Ascending aorta (tissue), 2 donors: ENCODE measurements at regions of chr5 and their contacts with region 1.

Region 1: DNA sequence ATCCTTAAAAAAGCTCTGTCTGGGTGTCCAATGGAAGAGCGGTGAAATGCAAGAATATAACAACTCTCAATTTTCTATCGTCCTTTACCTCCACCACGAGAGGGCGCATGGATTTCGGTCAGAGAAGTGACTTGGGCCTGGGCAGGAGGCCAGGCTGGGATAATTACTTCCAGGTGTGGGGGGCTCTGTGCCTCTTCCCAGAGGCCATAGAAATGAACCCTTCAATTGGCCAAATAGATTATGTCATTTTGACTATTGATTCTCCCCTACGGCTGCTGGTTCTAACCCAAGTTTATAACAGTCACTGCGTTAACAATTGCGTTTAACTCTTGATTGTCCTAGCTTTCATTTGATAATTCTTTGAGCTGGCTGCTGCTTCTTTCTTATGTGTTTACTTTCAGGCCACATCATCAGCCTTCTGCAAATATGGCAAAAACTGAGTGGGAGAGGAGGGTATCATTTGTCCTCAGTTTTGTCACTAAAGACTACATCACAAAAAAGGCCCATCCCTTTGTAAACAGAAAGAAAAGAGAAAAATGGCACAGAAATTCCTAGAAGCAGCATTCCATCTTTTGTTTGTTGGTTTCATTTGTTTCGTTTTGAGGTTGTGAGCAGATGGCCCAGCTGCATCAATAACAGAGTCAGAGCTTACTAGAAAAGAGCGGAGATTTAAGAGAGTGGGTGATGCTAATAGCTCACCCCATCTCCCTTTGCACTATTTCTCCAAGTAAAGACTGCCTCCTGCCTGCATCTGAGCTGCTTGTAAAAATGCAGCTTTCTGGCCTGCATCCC is 45.4 kb upstream of the ZFR start:
- DNase-seq: peak in 1 of 2 donors; percentile 86
- H3K4me3 ChIP-seq: no peak overlapping the region
- H3K27ac ChIP-seq: no peak overlapping the region
- H3K4me1 ChIP-seq: peaks cover 0 to 5% of the 10 kb centered on the region in 2 donors
- H3K27me3 ChIP-seq: no peaks in the 10 kb centered on the region
- CTCF ChIP-seq: peak; percentile 78 to 86 (median 81)

Region 2: GRCh38 chr5:32613050-32613672 is 123.2 kb after region 1 on chr5:
- intact Hi-C with region 1: loop called (anchors 1 kb)
- DNase-seq: peak; percentile 37 to 92
- H3K4me3 ChIP-seq: no peak overlapping the region
- H3K27ac ChIP-seq: peak overlapping the region; percentile 51 to 59
- H3K4me1 ChIP-seq: peaks cover 3 to 13% of the 10 kb centered on the region in 2 donors
- H3K27me3 ChIP-seq: no peaks in the 10 kb centered on the region
- CTCF ChIP-seq: peak; percentile 71 to 91 (median 85)

Region 3: DNA sequence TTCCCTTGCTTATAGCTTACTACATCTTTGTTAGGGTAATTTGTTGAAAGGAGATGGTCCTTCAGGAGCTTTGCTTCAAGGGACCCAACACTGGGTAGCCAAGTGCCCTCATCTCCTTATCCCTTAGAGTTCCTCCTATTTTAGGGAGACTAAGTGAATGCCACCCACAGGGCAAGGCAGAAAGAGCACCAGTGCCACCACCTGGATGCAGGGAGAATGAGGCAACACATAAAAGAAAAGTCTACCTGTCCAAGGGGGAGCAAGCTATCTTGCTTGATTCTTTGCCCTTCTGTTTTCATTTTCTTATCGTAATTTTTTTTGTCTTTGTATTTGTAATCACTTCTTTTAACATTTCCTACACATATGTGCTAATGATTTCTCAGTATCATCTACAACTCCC is 426.7 kb after region 1 on chr5:
- intact Hi-C with region 1: loop called (anchors 1 kb)
- DNase-seq: peak in 1 of 2 donors; percentile 65
- H3K4me3 ChIP-seq: no peak overlapping the region
- H3K27ac ChIP-seq: no peak overlapping the region
- H3K4me1 ChIP-seq: no peaks in the 10 kb centered on the region
- H3K27me3 ChIP-seq: no peaks in the 10 kb centered on the region
- CTCF ChIP-seq: peak; percentile 25 to 61 (median 39)

Region 4: GRCh38 chr5:33423018-33423630 is 933.1 kb after region 1 on chr5:
- intact Hi-C with region 1: loop called (anchors 10 kb)
- DNase-seq: no peak
- H3K4me3 ChIP-seq: no peak overlapping the region
- H3K27ac ChIP-seq: no peak overlapping the region
- H3K4me1 ChIP-seq: no peaks in the 10 kb centered on the region
- H3K27me3 ChIP-seq: no peaks in the 10 kb centered on the region
- CTCF ChIP-seq: peak; percentile 38 to 56 (median 55)